Right ventricle myocardium inferior (tissue), 1 donor: ENCODE measurements at regions of chr10 and their contacts with region 1.

Region 1: DNA sequence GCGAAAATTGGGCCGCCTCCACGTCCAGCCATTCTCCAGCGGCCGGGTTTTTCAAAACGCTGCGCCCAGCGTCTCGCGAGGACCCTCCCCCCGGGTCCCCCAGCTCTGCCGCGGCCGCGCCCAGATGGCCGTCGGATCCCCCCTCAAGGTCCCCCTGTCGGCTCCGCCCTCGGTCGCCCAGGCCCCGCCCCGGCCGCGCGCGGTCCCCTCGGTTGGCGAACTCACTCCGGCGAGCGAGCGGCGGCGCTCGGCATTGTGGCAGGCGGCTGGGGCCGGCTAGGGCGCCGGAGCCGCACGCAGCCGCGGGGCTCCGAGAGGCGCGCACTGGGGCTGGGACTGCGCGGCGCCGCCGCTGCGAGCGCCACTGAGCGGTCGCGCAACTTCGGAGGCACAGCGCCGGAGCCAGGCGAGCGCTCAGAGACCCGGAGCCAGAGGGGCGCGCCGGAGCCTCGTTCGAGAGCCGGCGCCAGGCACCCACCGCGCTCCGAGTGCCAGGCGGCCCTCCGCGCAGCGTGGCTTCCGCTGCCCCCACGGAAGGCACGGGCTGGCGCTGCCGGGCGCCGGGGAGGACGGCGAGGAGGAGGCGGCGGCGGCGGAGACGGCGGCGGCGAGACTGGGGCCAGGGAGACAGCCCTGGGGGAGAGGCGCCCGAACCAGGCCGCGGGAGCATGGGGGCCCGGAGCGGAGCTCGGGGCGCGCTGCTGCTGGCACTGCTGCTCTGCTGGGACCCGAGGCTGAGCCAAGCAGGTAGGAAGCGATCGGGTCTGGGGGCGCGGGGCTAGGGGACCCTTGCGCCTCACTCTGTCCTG is at the start of gene UNC5B:
- DNase-seq: peak; percentile 94
- ATAC-seq: peak; percentile 93
- total RNA-seq, gene UNC5B: 13.1 TPM

Region 2: GRCh38 chr10:70925377-70926225 is 286.9 kb before region 1 on chr10:
- intact Hi-C with region 1: loop called (anchors 2 kb)
- DNase-seq: peak; percentile 75
- ATAC-seq: peak; percentile 78

Region 3: GRCh38 chr10:70956029-70956759 is 256.3 kb before region 1 on chr10:
- intact Hi-C with region 1: no loop called
- DNase-seq: no peak
- ATAC-seq: no peak

Region 4: GRCh38 chr10:71068861-71069271 is 143.7 kb before region 1 on chr10:
- intact Hi-C with region 1: loop called (anchors 5 kb)
- DNase-seq: no peak
- ATAC-seq: peak; percentile 75

Region 5: GRCh38 chr10:71270301-71271220 is 58.0 kb after region 1 on chr10:
- intact Hi-C with region 1: loop called (anchors 1 kb)
- DNase-seq: peak; percentile 64
- ATAC-seq: no peak

Region 6: DNA sequence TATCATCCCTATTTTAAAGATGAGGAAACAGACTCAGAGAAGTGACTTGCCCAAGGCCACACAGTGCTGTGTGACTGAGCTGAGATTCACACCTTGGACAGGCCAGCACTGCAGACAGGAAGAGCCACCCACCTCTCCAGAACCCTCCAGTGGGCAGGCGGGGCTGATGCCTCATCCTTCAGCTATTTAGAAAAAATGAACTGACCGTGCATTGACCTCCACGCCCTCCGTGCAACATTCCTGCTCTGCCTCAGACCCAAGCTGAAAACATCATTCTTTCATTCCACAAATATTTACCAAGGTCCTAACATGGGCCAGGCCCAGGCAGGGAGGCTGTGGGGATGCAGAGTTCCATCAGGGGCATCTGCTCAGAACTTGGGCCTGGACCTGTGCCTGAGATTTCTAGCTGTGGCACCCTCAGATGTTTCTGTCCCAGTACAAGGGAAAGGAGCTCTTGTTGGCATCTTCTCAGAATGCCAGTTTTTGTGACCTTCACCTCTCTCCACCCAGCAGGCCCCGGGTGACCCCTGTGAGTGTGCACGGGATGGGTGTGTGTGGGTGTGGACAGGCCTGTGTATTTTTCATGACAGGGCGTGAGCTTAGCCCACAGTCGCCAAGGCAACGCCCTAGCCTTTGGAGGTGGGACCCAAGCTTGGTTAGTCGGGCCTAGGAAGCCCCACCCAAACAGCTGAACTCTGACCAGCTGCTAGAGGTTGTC is 554.3 kb after region 1 on chr10:
- intact Hi-C with region 1: no loop called
- DNase-seq: peak; percentile 89
- ATAC-seq: peak; percentile 47